ENCODE measurements at regions of chr19 and their contacts with region 1.

Region 1: GRCh38 chr19:20077791-20078463 is at the start of gene ZNF90:
- DNase-seq: peak; percentile 80
- ATAC-seq: peak; percentile 99
- H3K4me3 Mint-ChIP-seq: peak within 1 kb of the TSS; percentile 96
- H3K27ac Mint-ChIP-seq: peak within 1 kb of the TSS; percentile 87
- H3K4me1 Mint-ChIP-seq: peaks cover 17% of the 10 kb centered on the region
- H3K27me3 Mint-ChIP-seq: no peaks in the 10 kb centered on the region
- total RNA-seq, gene ZNF90: 19.8 to 21.0 TPM

Region 2: GRCh38 chr19:20039203-20039723 is 38.7 kb before region 1 on chr19 and contains the start of gene ZNF682:
- POLR2A ChIA-PET with region 1: interaction called, 12 read pairs
- DNase-seq: peak; percentile 90
- ATAC-seq: peak; percentile 99
- H3K4me3 Mint-ChIP-seq: peak within 1 kb of the TSS; percentile 96
- H3K27ac Mint-ChIP-seq: peak within 1 kb of the TSS; percentile 96
- H3K4me1 Mint-ChIP-seq: peaks cover 11% of the 10 kb centered on the region
- H3K27me3 Mint-ChIP-seq: peaks cover 4% of the 10 kb centered on the region
- total RNA-seq, gene ZNF682: 13.1 to 16.9 TPM

Region 3: GRCh38 chr19:20051841-20052768 is 25.8 kb before region 1 on chr19:
- POLR2A ChIA-PET with region 1: interaction called, 10 read pairs
- DNase-seq: peak; percentile 71
- ATAC-seq: peak; percentile 98
- H3K4me3 Mint-ChIP-seq: peak overlapping the region; percentile 98
- H3K27ac Mint-ChIP-seq: peak overlapping the region; percentile 87
- H3K4me1 Mint-ChIP-seq: peaks cover 8% of the 10 kb centered on the region
- H3K27me3 Mint-ChIP-seq: no peaks in the 10 kb centered on the region

Region 4: GRCh38 chr19:20237761-20238623 is 160.1 kb after region 1 on chr19:
- POLR2A ChIA-PET with region 1: interaction called, 28 read pairs
- DNase-seq: peak; percentile 87
- ATAC-seq: peak; percentile 94
- H3K4me3 Mint-ChIP-seq: peak overlapping the region; percentile 99
- H3K27ac Mint-ChIP-seq: peak overlapping the region; percentile 98
- H3K4me1 Mint-ChIP-seq: peaks cover 5% of the 10 kb centered on the region
- H3K27me3 Mint-ChIP-seq: no peaks in the 10 kb centered on the region

Measured in activated naive CD8-positive, alpha-beta T cell treated with anti-CD3 and anti-CD28 coated beads, Interleukin-2, amount 10 ng/mL, durations not matched to agents 7 days and 5 days (primary cell).